Activated T-helper 2 cell treated with anti-CD3 and anti-CD28 coated beads, Interferon-gamma antibody, Interleukin-2, Interleukin-4, amounts not matched to agents 10 μg/mL and 5 μg/mL and 100 μg/mL, durations not matched to agents 14 hours and 24 hours and 36 hours (primary cell): ENCODE measurements at regions of chr22 and their contacts with region 1.

Region 1: DNA sequence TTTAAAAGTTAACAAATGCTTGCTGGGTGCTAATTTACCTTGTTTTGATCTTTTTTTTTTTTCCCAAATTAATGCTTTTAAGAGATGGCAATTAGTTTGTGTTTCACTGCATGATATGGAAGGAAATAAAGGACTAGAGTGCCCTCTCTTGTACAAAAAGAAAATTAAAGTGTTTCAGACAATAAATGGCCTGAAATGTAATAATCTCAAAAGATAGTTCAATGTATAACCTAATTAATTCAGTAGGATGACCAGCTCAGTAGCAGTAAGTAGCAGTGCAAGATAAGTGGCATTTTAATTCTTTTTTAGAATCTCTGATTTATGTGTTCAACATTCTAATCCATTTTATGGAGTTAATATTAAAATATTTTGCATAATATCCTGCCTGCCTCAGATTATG is 39.9 kb upstream of the MYO18B start:
- DNase-seq: no peak
- H3K4me3 Mint-ChIP-seq: peak overlapping the region; percentile 64
- H3K27ac Mint-ChIP-seq: peak overlapping the region; percentile 79
- H3K4me1 Mint-ChIP-seq: peaks cover 57% of the 10 kb centered on the region
- H3K27me3 Mint-ChIP-seq: no peaks in the 10 kb centered on the region

Region 2: GRCh38 chr22:25465949-25466348 is 236.1 kb before region 1 on chr22:
- intact Hi-C with region 1: loop called (anchors 1 kb)
- DNase-seq: no peak
- H3K4me3 Mint-ChIP-seq: no peak overlapping the region
- H3K27ac Mint-ChIP-seq: peak overlapping the region; percentile 33
- H3K4me1 Mint-ChIP-seq: peaks cover 18% of the 10 kb centered on the region
- H3K27me3 Mint-ChIP-seq: no peaks in the 10 kb centered on the region

Region 3: DNA sequence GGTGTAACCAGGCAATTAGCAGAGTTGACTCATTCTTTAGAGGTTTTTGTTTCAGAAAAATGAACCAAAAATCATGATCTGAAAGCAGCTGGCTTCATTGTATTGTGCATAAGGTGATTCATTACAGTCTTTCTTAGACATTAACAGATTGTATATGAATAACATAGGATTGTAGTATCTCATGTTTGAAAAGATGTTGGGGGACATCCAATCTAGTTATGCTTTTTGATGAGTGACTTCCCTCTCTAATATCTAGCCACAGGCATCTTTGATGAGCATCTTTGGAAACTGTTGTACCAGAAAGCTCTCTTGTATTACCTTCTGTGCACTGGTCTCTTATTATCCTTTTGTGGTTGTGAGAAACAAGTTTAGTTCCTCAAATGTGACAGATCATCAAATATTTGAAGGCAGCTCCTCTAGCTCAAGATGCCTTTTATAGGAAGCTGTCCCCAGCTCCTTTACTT is 129.3 kb before region 1 on chr22:
- intact Hi-C with region 1: loop called (anchors 2 kb)
- DNase-seq: no peak
- H3K4me3 Mint-ChIP-seq: no peak overlapping the region
- H3K27ac Mint-ChIP-seq: peak overlapping the region; percentile 80
- H3K4me1 Mint-ChIP-seq: peaks cover 61% of the 10 kb centered on the region
- H3K27me3 Mint-ChIP-seq: no peaks in the 10 kb centered on the region

Region 4: DNA sequence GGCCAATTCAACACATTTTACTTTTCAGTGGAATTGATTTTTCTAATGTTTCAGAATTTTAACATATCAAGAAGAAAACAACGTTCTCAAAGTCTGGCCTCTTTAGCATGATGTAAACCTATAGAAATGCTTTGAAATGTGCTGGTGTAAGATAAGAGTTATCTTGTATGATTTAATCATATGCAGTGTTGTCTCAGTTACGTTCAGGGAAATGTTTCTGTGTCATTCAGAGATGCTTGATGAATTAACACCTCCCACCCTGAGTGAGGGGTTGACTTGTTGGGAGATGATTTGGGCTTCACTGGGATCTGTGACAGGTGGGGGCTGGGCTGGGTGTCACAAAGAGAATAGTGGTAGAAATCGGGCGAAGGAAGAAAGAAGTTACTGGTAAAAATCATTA is 24.2 kb after region 1 on chr22:
- intact Hi-C with region 1: loop called (anchors 2 kb)
- DNase-seq: no peak
- H3K4me3 Mint-ChIP-seq: peak overlapping the region; percentile 24
- H3K27ac Mint-ChIP-seq: peak overlapping the region; percentile 96
- H3K4me1 Mint-ChIP-seq: peaks cover 42% of the 10 kb centered on the region
- H3K27me3 Mint-ChIP-seq: no peaks in the 10 kb centered on the region

Region 5: GRCh38 chr22:25747245-25747944 is 45.4 kb after region 1 on chr22:
- intact Hi-C with region 1: loop called (anchors 2 kb)
- DNase-seq: no peak
- H3K4me3 Mint-ChIP-seq: no peak overlapping the region
- H3K27ac Mint-ChIP-seq: peak overlapping the region; percentile 100
- H3K4me1 Mint-ChIP-seq: peaks cover 82% of the 10 kb centered on the region
- H3K27me3 Mint-ChIP-seq: no peaks in the 10 kb centered on the region

Region 6: GRCh38 chr22:25976356-25976755 is 274.3 kb after region 1 on chr22:
- intact Hi-C with region 1: no loop called
- DNase-seq: no peak
- H3K4me3 Mint-ChIP-seq: no peak overlapping the region
- H3K27ac Mint-ChIP-seq: no peak overlapping the region
- H3K4me1 Mint-ChIP-seq: peaks cover 5% of the 10 kb centered on the region
- H3K27me3 Mint-ChIP-seq: peaks cover 1% of the 10 kb centered on the region